Vagina (tissue), 2 donors: ENCODE measurements at regions of chr7 and their contacts with region 1.

Region 1: GRCh38 chr7:129468087-129468486 is 33.9 kb downstream of the STRIP2 start:
- DNase-seq: no peak
- H3K4me3 ChIP-seq: no peak overlapping the region
- H3K27ac ChIP-seq: no peak overlapping the region
- H3K4me1 ChIP-seq: no peaks in the 10 kb centered on the region
- H3K27me3 ChIP-seq: no peaks in the 10 kb centered on the region
- CTCF ChIP-seq: no peak
- POLR2A ChIP-seq: no peak

Region 2: GRCh38 chr7:129218514-129219062 is 249.5 kb before region 1 on chr7:
- intact Hi-C with region 1: loop called (anchors 5 kb)
- DNase-seq: no peak
- H3K4me3 ChIP-seq: no peak overlapping the region
- H3K27ac ChIP-seq: no peak overlapping the region
- H3K4me1 ChIP-seq: no peaks in the 10 kb centered on the region
- H3K27me3 ChIP-seq: no peaks in the 10 kb centered on the region
- CTCF ChIP-seq: peak; percentile 77 to 90 (median 89)
- POLR2A ChIP-seq: no peak

Region 3: GRCh38 chr7:129298268-129298893 is 169.7 kb before region 1 on chr7:
- intact Hi-C with region 1: loop called (anchors 5 kb)
- DNase-seq: no peak
- H3K4me3 ChIP-seq: no peak overlapping the region
- H3K27ac ChIP-seq: no peak overlapping the region
- H3K4me1 ChIP-seq: peaks cover 4% of the 10 kb centered on the region
- H3K27me3 ChIP-seq: no peaks in the 10 kb centered on the region
- CTCF ChIP-seq: peak; percentile 35 to 53 (median 46)
- POLR2A ChIP-seq: no peak

Region 4: DNA sequence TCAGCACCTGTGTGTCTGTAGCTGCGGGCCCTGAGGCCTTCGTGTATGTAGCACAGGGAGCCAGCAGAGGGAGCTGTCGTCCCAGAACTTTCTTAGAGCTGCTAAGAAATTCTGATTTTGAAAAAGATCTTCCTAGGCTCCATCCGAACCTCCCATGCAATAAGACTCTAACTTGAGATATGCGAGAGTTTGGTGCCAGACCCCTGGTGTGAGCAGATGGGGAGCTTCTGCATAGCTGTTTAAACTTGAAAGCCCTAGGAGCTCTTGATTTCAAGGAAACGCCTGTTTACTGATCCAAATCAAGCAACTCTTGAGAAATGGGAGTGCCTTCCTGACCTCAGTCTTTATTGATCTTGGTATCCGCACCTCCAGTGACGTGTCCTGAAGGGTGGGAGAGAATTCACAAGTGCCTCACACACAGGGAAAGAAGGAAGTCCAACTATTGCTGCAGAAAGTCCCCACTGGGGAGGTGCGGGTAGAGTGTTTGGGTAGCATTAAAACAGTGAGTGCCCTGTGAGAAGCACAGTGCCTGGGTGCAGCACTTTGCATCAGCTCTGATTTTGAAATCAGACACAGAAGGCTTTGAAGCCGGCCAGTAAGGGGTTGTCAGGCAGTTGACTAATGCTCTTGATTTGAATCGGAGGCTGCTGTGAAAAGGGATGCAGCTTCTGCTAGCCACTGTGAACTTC is 100.2 kb before region 1 on chr7:
- intact Hi-C with region 1: loop called (anchors 10 kb)
- DNase-seq: no peak
- H3K4me3 ChIP-seq: no peak overlapping the region
- H3K27ac ChIP-seq: no peak overlapping the region
- H3K4me1 ChIP-seq: peaks cover 17% of the 10 kb centered on the region
- H3K27me3 ChIP-seq: no peaks in the 10 kb centered on the region
- CTCF ChIP-seq: peak; percentile 71 to 85 (median 77)
- POLR2A ChIP-seq: no peak

Region 5: DNA sequence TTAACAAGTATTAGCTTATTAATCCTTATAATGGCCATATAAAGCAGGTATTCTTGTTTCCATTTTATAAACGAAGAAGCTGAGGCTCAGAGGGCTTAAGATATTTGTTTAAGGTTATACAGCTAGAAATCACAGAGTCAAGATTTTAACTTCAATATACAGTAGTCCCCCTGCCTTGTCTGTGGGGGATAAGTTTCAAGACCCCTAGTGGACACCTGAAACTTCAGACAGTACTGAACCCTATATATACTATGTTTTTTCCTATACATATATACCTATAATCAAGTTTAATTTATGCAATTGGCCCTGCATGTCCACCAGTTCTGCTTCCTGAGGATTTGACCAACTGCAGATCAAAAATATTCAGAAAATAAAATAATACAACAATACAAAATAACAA is 78.3 kb before region 1 on chr7:
- intact Hi-C with region 1: no loop called
- DNase-seq: no peak
- H3K4me3 ChIP-seq: no peak overlapping the region
- H3K27ac ChIP-seq: no peak overlapping the region
- H3K4me1 ChIP-seq: no peaks in the 10 kb centered on the region
- H3K27me3 ChIP-seq: no peaks in the 10 kb centered on the region
- CTCF ChIP-seq: no peak
- POLR2A ChIP-seq: no peak